Vagina (tissue), 2 donors: ENCODE measurements at regions of chr1 and their contacts with region 1.

Region 1: DNA sequence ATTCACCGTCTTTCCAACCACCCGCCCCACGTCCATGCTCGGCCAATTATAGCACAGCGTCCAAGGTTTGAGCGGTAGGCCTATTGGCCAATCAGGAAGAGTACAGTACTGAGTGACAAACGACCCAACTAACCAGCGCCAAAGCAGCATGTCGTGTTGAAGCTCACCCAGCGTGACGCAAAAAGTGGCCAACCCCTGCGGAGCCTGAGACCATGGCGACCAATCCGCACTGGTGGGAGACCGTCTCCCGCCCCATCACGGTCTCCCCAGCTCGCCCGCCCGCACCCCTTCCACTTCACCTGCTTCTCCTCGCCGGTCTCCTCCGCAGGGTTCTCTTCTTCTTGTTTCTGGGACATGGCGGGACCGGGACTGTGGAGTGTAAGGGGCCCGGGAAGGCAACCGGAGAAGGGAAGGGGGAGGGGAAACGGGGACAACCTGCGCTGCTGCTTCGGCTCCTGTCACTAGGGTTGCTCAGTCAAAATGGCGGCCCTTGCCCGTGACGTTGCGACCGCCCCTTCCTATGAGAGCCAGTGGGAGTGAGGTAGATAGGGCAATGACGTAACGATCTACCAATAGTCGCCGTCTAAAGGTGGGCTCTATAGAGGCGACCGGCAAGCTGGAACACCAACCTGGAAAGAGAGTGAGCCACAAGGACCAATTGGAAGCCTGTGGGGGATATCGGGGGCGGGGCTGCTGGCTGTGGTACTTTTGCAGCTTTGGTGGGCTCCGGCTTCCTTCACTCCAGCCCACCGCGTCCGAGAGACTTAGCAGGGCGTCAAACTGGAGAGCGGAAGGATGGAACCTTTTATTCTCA is at the start of gene ENSA:
- DNase-seq: peak; percentile 99 to 100
- H3K4me3 ChIP-seq: peak within 1 kb of the TSS; percentile 63 to 68
- H3K27ac ChIP-seq: peak within 1 kb of the TSS; percentile 98
- H3K4me1 ChIP-seq: peaks cover 54% of the 10 kb centered on the region
- H3K27me3 ChIP-seq: no peaks in the 10 kb centered on the region
- CTCF ChIP-seq: no peak
- POLR2A ChIP-seq: peak; percentile 94 to 95
- total RNA-seq, gene ENSA: 117 TPM

Region 2: GRCh38 chr1:150383631-150384324 is 245.5 kb before region 1 on chr1:
- intact Hi-C with region 1: no loop called
- DNase-seq: no peak
- H3K4me3 ChIP-seq: no peak overlapping the region
- H3K27ac ChIP-seq: no peak overlapping the region
- H3K4me1 ChIP-seq: peaks cover 25% of the 10 kb centered on the region
- H3K27me3 ChIP-seq: no peaks in the 10 kb centered on the region
- CTCF ChIP-seq: no peak
- POLR2A ChIP-seq: no peak

Region 3: GRCh38 chr1:150561974-150562445 is 67.3 kb before region 1 on chr1:
- intact Hi-C with region 1: loop called (anchors 5 kb)
- DNase-seq: no peak
- H3K4me3 ChIP-seq: peak overlapping the region; percentile 48 to 72
- H3K27ac ChIP-seq: peak overlapping the region; percentile 100
- H3K4me1 ChIP-seq: peaks cover 85% of the 10 kb centered on the region
- H3K27me3 ChIP-seq: no peaks in the 10 kb centered on the region
- CTCF ChIP-seq: no peak
- POLR2A ChIP-seq: peak in 1 of 2 donors; percentile 64